ENCODE measurements at regions of chr12 and their contacts with region 1.

Region 1: GRCh38 chr12:56224102-56224701 is at the start of gene NABP2:
- DNase-seq: peak; percentile 90 to 94 (median 92)
- H3K4me3 ChIP-seq: peak within 1 kb of the TSS; percentile 67
- H3K4me3 Mint-ChIP-seq: peak within 1 kb of the TSS; percentile 86 to 99 (median 93)
- H3K27ac ChIP-seq: peak within 1 kb of the TSS; percentile 62
- H3K27ac Mint-ChIP-seq: peak within 1 kb of the TSS; percentile 90 to 100 (median 100)
- H3K4me1 ChIP-seq: peaks cover 34% of the 10 kb centered on the region
- H3K4me1 Mint-ChIP-seq: peaks cover 42 to 55% (median 53%) of the 10 kb centered on the region in 3 donors
- H3K27me3 ChIP-seq: no peaks in the 10 kb centered on the region
- H3K27me3 Mint-ChIP-seq: peaks cover 0 to 2% of the 10 kb centered on the region in 2 donors
- total RNA-seq, gene NABP2: 102 to 104 TPM

Region 2: DNA sequence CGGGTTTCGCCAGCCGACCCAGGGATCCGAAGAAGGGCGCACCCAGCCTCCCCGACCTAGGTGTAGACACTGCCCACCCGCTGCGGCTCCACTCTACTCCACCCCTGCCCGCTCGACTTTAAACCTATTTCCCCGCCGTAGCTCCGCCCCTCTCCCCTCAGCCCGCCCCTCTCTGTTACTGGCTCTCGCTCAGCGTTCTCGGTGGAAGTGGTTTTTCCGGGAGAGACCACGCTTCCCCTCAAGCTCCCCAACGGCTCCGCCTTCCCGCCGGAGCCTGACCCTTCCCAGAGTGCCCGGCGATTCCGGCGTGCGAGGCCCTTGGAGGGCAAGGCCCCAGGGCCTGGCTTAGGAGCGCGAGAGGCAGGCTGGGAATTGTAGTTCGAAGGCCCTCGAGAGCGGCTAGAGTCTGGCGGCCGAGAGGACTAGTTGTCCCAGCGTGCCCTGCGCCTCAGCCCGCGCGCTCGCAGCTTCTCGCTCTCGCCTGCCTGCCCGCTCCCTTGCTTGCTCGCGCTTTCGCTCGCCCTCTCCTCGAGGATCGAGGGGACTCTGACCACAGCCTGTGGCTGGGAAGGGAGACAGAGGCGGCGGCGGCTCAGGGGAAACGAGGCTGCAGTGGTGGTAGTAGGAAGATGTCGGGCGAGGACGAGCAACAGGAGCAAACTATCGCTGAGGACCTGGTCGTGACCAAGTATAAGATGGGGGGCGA is 119.9 kb before region 1 on chr12 and contains the start of gene PA2G4:
- CTCF ChIA-PET with region 1: no interaction called
- POLR2A ChIA-PET with region 1: interaction called, 15 read pairs
- DNase-seq: peak; percentile 90 to 98 (median 96)
- H3K4me3 ChIP-seq: peak within 1 kb of the TSS; percentile 79
- H3K4me3 Mint-ChIP-seq: peak within 1 kb of the TSS; percentile 97 to 100 (median 98)
- H3K27ac ChIP-seq: peak within 1 kb of the TSS; percentile 82
- H3K27ac Mint-ChIP-seq: peak within 1 kb of the TSS; percentile 95 to 99 (median 98)
- H3K4me1 ChIP-seq: peaks cover 40% of the 10 kb centered on the region
- H3K4me1 Mint-ChIP-seq: peaks cover 61 to 68% (median 62%) of the 10 kb centered on the region in 3 donors
- H3K27me3 ChIP-seq: no peaks in the 10 kb centered on the region
- H3K27me3 Mint-ChIP-seq: no peaks in the 10 kb centered on the region
- total RNA-seq, gene PA2G4: 468 to 504 TPM

Region 3: GRCh38 chr12:56206457-56207166 is 17.6 kb before region 1 on chr12:
- CTCF ChIA-PET with region 1: interaction called, 19 read pairs
- POLR2A ChIA-PET with region 1: no interaction called
- DNase-seq: peak in 3 of 5 donors; percentile 12 to 57 (median 14)
- H3K4me3 ChIP-seq: no peak overlapping the region
- H3K4me3 Mint-ChIP-seq: no peak overlapping the region
- H3K27ac ChIP-seq: no peak overlapping the region
- H3K27ac Mint-ChIP-seq: peak overlapping the region in 5 of 8 donors; percentile 4 to 53 (median 39)
- H3K4me1 ChIP-seq: no peaks in the 10 kb centered on the region
- H3K4me1 Mint-ChIP-seq: peaks cover 0 to 8% (median 0%) of the 10 kb centered on the region in 3 donors
- H3K27me3 ChIP-seq: no peaks in the 10 kb centered on the region
- H3K27me3 Mint-ChIP-seq: no peaks in the 10 kb centered on the region

Region 4: GRCh38 chr12:56258057-56258819 is 34.0 kb after region 1 on chr12 and contains the start of gene ANKRD52:
- CTCF ChIA-PET with region 1: interaction called, 15 read pairs
- POLR2A ChIA-PET with region 1: interaction called, 7 read pairs
- DNase-seq: peak; percentile 75 to 86 (median 83)
- H3K4me3 ChIP-seq: peak within 1 kb of the TSS; percentile 92
- H3K4me3 Mint-ChIP-seq: peak within 1 kb of the TSS; percentile 90 to 95 (median 91)
- H3K27ac ChIP-seq: peak within 1 kb of the TSS; percentile 86
- H3K27ac Mint-ChIP-seq: peak within 1 kb of the TSS; percentile 81 to 96 (median 92)
- H3K4me1 ChIP-seq: peaks cover 23% of the 10 kb centered on the region
- H3K4me1 Mint-ChIP-seq: peaks cover 25 to 37% (median 29%) of the 10 kb centered on the region in 3 donors
- H3K27me3 ChIP-seq: no peaks in the 10 kb centered on the region
- H3K27me3 Mint-ChIP-seq: no peaks in the 10 kb centered on the region
- total RNA-seq, gene ANKRD52: 67.0 to 69.9 TPM

Region 5: GRCh38 chr12:56278905-56279304 is 54.7 kb after region 1 on chr12:
- CTCF ChIA-PET with region 1: no interaction called
- POLR2A ChIA-PET with region 1: no interaction called
- DNase-seq: no peak
- H3K4me3 ChIP-seq: no peak overlapping the region
- H3K4me3 Mint-ChIP-seq: no peak overlapping the region
- H3K27ac ChIP-seq: no peak overlapping the region
- H3K27ac Mint-ChIP-seq: no peak overlapping the region
- H3K4me1 ChIP-seq: no peaks in the 10 kb centered on the region
- H3K4me1 Mint-ChIP-seq: peaks cover 0 to 3% (median 3%) of the 10 kb centered on the region in 3 donors
- H3K27me3 ChIP-seq: no peaks in the 10 kb centered on the region
- H3K27me3 Mint-ChIP-seq: no peaks in the 10 kb centered on the region